Activated B cell treated with CpG ODN at 0.5 μM for 24 hours (primary cell): ENCODE measurements at regions of chr17 and their contacts with region 1.

Region 1: GRCh38 chr17:8189711-8190477 is at the start of gene BORCS6:
- DNase-seq: peak; percentile 84
- ATAC-seq: peak; percentile 67
- H3K4me3 Mint-ChIP-seq: no peak within 1 kb of the TSS
- H3K27ac Mint-ChIP-seq: peak within 1 kb of the TSS; percentile 95
- H3K4me1 Mint-ChIP-seq: peaks cover 11% of the 10 kb centered on the region
- H3K27me3 Mint-ChIP-seq: no peaks in the 10 kb centered on the region
- CTCF ChIP-seq: no peak
- total RNA-seq, gene BORCS6: 12.3 and 12.8 TPM in 2 replicates

Region 2: GRCh38 chr17:8138672-8139371 is 51.1 kb before region 1 on chr17:
- CTCF ChIA-PET with region 1: no interaction called
- POLR2A ChIA-PET with region 1: interaction called, 15 read pairs
- intact Hi-C with region 1: loop called (anchors 1 kb)
- DNase-seq: peak; percentile 94
- ATAC-seq: peak; percentile 94
- H3K4me3 Mint-ChIP-seq: no peak overlapping the region
- H3K27ac Mint-ChIP-seq: no peak overlapping the region
- H3K4me1 Mint-ChIP-seq: no peaks in the 10 kb centered on the region
- H3K27me3 Mint-ChIP-seq: no peaks in the 10 kb centered on the region
- CTCF ChIP-seq: peak; percentile 93

Region 3: DNA sequence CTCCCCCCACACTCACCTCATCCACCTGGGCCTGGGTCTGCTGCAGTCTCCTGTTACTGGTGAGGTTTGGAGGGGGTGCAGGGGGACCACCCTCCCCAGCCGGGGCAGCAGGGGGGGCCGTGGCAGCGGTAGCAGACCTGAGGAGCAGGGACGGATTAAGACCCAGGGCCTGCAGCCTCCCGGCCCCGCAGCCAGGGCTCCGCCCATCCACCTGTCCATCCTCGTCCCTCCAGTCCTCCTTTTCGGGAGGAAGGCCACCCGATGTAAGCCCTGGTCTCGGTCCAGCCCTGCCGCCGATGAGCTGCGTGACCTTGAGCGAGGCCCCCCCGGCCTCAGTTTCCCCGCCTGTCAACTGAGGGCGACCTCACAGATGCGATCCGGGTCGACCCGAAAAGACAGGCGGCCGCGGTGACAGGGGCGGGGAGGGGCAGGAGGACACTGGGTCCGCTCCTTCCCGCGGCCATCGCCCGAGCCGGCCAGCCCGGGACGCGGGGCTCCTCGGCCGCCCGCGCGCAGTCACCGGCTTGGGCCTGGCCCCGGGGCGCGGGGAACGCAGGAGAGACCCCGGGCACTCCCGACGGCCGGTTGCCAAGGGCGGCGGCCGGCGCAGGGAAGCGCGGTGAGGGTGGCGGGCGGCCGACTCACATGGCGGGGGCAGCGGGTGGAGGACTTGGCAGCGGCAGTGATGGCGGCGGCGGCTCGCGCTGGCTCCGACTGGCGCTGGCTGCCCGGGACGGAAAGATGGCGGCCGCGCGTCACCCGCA is 27.5 kb before region 1 on chr17 and contains the start of gene VAMP2:
- CTCF ChIA-PET with region 1: interaction called, 4 read pairs
- POLR2A ChIA-PET with region 1: interaction called, 80 read pairs
- intact Hi-C with region 1: no loop called
- DNase-seq: peak; percentile 91
- ATAC-seq: peak; percentile 71
- H3K4me3 Mint-ChIP-seq: peak within 1 kb of the TSS; percentile 91
- H3K27ac Mint-ChIP-seq: peak within 1 kb of the TSS; percentile 95
- H3K4me1 Mint-ChIP-seq: peaks cover 56% of the 10 kb centered on the region
- H3K27me3 Mint-ChIP-seq: no peaks in the 10 kb centered on the region
- CTCF ChIP-seq: no peak
- total RNA-seq, gene VAMP2: 82.0 and 97.7 TPM in 2 replicates

Region 4: GRCh38 chr17:8204761-8205555 is 15.1 kb after region 1 on chr17:
- CTCF ChIA-PET with region 1: interaction called, 3 read pairs
- POLR2A ChIA-PET with region 1: interaction called, 69 read pairs
- intact Hi-C with region 1: loop called (anchors 1 kb)
- DNase-seq: no peak
- ATAC-seq: no peak
- H3K4me3 Mint-ChIP-seq: no peak overlapping the region
- H3K27ac Mint-ChIP-seq: no peak overlapping the region
- H3K4me1 Mint-ChIP-seq: peaks cover 8% of the 10 kb centered on the region
- H3K27me3 Mint-ChIP-seq: no peaks in the 10 kb centered on the region
- CTCF ChIP-seq: no peak

Region 5: DNA sequence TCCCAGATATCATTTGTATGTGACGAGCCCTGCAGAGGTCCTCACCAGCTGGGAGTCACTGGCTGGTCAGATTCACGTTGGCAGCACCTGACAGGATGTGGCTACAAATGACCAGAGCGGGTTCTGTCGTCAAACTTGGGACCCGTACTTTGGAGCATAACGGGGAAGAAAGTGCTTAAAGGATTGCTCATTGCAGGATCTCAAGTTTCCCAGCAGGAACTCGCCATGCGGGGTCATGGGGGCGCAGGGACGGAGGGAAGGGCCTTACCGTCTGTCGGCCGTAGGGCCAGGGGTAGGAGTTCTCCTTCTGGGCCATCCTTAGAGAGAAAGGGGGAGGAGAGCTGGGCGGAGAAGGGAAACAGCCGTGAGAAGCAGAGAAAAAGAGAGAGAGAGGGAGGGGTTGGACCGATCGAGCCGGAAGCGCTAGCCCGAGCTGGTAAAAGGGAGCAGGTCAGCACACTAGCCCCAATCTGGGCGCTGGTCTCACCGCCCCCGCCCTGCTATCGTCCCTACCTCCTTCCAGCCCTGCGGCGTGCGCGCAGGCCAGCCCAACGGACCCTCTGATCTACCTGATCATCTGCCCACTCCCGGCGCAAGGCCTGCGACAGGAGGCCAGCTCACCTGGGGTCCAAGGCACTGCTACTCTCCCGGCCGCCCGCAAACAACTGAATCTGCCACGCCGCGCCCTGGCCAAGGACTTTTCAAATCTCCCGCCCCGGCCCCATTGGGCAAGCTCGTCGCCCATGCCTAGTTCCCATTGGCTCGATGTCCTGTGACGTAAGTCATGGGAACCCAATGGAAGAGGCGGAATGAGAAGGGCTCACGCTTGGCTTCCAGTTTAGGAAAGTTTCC is 20.2 kb after region 1 on chr17 and contains the start of gene AURKB:
- CTCF ChIA-PET with region 1: no interaction called
- POLR2A ChIA-PET with region 1: interaction called, 69 read pairs
- intact Hi-C with region 1: loop called (anchors 1 kb)
- DNase-seq: peak; percentile 80
- ATAC-seq: peak; percentile 99
- H3K4me3 Mint-ChIP-seq: peak within 1 kb of the TSS; percentile 95
- H3K27ac Mint-ChIP-seq: peak within 1 kb of the TSS; percentile 91
- H3K4me1 Mint-ChIP-seq: peaks cover 19% of the 10 kb centered on the region
- H3K27me3 Mint-ChIP-seq: no peaks in the 10 kb centered on the region
- CTCF ChIP-seq: no peak
- total RNA-seq, gene AURKB: 1.7 and 3.0 TPM in 2 replicates

Region 6: DNA sequence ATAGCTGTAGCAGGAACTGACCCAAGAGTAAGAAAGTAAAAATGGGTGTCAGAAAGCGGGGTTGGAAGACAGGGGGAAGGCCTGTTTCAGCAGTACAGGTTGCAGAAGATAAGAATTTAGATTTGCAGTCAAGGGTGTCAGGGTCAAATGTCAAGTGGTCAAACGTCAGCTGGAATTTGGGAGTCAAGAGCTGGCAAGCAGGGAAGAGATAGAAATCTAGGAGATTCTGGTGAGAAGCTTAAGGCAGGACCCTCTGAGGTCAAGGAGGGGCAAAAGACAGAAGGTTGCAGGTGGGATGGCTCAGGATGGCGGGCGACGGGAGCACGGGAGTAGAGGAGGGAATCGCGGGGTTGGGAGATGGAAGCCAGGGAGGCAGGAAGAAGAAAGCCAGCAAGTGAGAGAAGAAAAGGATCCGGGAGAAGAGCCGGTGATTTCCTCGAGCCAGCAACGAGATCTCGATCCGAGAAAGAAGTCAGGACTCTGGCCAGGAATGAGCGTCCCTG is 105.0 kb after region 1 on chr17:
- CTCF ChIA-PET with region 1: interaction called, 3 read pairs
- POLR2A ChIA-PET with region 1: interaction called, 22 read pairs
- intact Hi-C with region 1: loop called (anchors 1 kb)
- DNase-seq: no peak
- ATAC-seq: no peak
- H3K4me3 Mint-ChIP-seq: peak overlapping the region; percentile 92
- H3K27ac Mint-ChIP-seq: peak overlapping the region; percentile 86
- H3K4me1 Mint-ChIP-seq: peaks cover 30% of the 10 kb centered on the region
- H3K27me3 Mint-ChIP-seq: no peaks in the 10 kb centered on the region
- CTCF ChIP-seq: no peak

Region 7: GRCh38 chr17:8300627-8301242 is 110.8 kb after region 1 on chr17:
- CTCF ChIA-PET with region 1: interaction called, 3 read pairs
- POLR2A ChIA-PET with region 1: interaction called, 22 read pairs
- intact Hi-C with region 1: loop called (anchors 1 kb)
- DNase-seq: peak; percentile 30
- ATAC-seq: peak; percentile 97
- H3K4me3 Mint-ChIP-seq: no peak overlapping the region
- H3K27ac Mint-ChIP-seq: peak overlapping the region; percentile 46
- H3K4me1 Mint-ChIP-seq: peaks cover 8% of the 10 kb centered on the region
- H3K27me3 Mint-ChIP-seq: no peaks in the 10 kb centered on the region
- CTCF ChIP-seq: no peak